Heart right ventricle (tissue), 16 donors: ENCODE measurements at regions of chr2 and their contacts with region 1.

Region 1: DNA sequence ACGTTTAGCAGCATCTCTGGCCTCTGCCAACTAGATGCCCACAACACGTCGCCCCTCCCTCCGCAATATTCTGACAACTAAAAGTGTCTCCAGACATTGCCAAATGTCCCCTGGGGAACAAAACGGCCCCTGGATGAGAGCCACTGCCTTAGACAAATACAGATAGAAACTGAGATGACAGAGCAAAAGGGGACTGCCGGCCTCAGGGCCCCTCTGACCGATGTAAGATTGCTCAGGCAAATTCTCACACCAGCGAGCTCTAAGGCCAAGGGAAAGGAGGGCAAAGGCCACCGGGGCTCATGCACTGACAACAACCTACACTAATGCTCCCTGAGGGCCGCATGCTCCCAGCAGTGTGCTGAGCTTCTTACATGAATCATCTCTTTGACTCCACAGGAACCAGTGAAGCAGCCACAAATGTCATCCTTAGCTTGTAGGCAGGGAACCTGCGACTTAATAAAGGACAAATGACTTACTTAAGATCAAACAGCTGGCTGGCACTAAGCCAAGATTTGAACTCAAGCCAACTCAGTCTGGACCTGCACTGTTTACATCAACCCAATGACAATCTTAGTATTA is 228.5 kb downstream of the TTC32 start:
- DNase-seq: peak in 1 of 2 donors; percentile 10
- ATAC-seq: peak in 5 of 8 donors; percentile 13 to 56 (median 34)
- H3K4me3 ChIP-seq: no peak overlapping the region
- H3K27ac ChIP-seq: peak overlapping the region in 2 of 10 donors; percentile 22 to 39
- H3K4me1 ChIP-seq: peaks cover 0 to 14% (median 7%) of the 10 kb centered on the region in 9 donors
- H3K27me3 ChIP-seq: no peaks in the 10 kb centered on the region
- CTCF ChIP-seq: no peak

Region 2: GRCh38 chr2:18976168-18976961 is 696.9 kb before region 1 on chr2:
- intact Hi-C with region 1: loop called in 1 of 10 experiments (anchors 10 kb)
- DNase-seq: no peak
- ATAC-seq: peak; percentile 44 to 78 (median 70)
- H3K4me3 ChIP-seq: peak overlapping the region in 6 of 10 donors; percentile 5 to 38 (median 32)
- H3K27ac ChIP-seq: peak overlapping the region; percentile 26 to 84 (median 64)
- H3K4me1 ChIP-seq: peaks cover 0 to 36% (median 18%) of the 10 kb centered on the region in 9 donors
- H3K27me3 ChIP-seq: no peaks in the 10 kb centered on the region
- CTCF ChIP-seq: no peak

Region 3: DNA sequence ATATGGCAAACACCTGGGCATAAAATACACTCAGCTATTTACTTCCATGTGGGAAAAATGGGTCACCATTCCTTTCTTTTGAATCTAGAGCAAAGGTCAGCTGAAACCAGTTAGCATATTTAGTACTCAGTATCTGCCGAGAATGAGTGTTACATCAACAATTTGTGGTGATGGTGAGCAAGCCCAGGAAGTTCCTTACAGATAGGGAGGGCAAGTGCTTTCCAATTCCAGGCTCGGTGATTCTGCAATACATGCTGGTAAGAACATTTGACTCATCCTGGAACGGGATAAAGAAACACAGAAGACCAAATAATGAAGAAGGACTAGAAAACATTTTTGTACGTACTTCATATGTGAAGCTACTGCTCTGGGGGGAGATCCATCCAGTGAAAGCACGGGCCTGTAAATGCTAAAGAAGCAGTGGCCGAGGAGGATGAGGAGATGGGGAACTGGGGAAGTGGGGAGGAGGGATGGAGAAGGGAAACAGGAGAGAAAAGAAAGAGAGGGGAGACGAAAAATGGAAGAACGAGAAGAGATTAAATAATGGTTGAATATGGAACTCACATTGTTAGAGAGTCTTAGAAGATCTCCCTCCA is 23.4 kb before region 1 on chr2:
- intact Hi-C with region 1: loop called in 2 of 10 experiments (anchors 1 to 2 kb)
- DNase-seq: peak in 1 of 2 donors; percentile 38
- ATAC-seq: peak; percentile 60 to 95 (median 90)
- H3K4me3 ChIP-seq: no peak overlapping the region
- H3K27ac ChIP-seq: peak overlapping the region in 3 of 10 donors; percentile 16 to 78 (median 54)
- H3K4me1 ChIP-seq: peaks cover 0 to 18% (median 0%) of the 10 kb centered on the region in 9 donors
- H3K27me3 ChIP-seq: no peaks in the 10 kb centered on the region
- CTCF ChIP-seq: no peak